AG04449 (cell line): ENCODE measurements at regions of chr1 and their contacts with region 1.

Region 1: DNA sequence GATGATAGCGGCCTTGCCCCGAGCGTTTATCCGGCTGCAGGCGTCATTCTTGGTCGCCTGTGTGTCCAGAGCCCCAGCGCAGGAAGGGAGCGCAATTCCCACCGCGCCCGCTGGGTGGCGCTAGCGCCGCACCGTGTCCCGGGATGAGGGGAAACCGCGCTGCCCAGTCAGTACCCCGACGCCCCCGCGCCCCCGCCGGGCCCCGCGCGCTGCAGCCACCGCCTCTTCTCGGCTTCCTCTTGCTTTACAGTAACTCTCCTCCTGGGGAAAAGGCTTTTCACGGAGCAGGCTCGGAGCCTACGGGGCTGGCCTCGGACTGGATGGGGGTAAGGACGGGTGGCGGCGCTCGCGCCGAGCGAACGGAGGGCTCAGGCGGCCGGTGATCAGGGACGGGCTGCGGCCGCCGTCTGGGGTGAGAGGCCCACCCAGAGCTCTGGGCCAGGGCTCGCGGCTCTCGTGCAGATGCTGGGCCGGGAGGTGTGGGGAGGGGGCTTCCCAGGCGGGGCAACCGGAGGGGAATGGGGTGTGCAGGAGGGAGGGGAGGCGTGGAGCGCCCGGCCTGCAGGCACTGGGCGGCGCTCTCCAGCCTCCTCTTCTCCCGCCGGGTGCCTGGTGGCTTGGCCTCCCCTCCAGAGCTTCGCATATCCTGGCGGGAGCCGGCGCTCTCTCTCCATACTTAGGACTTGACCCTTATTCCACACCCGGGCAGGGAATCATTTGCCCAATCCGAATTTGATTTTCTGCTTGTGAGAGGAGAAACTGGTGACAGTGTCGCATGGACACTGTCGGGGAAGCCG is 29.8 kb downstream of the TEX35 start:
- DNase-seq: no peak
- H3K4me3 ChIP-seq: peak overlapping the region; percentile 72
- CTCF ChIP-seq: peak; percentile 93

Region 2: GRCh38 chr1:178310685-178311105 is 232.1 kb before region 1 on chr1:
- CTCF ChIA-PET with region 1: interaction called, 69 read pairs
- POLR2A ChIA-PET with region 1: no interaction called
- DNase-seq: peak; percentile 34
- H3K4me3 ChIP-seq: no peak overlapping the region
- CTCF ChIP-seq: peak; percentile 43

Region 3: GRCh38 chr1:178733972-178734371 is 191.2 kb after region 1 on chr1:
- CTCF ChIA-PET with region 1: interaction called, 12 read pairs
- POLR2A ChIA-PET with region 1: no interaction called
- DNase-seq: no peak
- H3K4me3 ChIP-seq: no peak overlapping the region
- CTCF ChIP-seq: no peak

Region 4: DNA sequence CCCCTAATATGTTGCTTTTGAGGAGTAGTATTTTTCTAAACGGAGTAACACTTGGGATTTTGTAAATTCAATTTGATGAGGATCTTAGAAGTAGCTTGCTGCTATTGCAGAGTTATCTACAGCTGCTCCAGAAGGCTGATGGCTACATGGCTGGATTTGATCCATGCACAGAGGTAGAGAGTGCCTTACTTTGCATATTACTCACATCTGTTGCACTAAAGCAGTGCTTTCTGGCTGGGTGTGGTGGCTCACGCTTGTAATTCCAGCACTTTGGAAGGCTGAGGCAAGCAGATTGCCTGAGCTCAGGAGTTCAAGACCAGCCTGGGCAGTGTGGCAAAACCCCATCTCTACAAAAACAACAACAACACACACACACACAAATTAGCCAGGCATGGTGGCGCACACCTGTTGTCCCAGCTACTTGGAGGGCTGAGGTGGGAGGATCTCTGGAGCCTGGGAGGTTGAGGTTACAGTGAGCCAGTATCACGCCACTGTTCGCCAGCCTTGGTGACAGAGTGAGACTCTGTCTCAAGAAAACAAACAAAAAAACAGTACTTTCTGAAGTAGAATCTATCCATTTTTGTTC is 206.9 kb after region 1 on chr1:
- CTCF ChIA-PET with region 1: interaction called, 106 read pairs
- POLR2A ChIA-PET with region 1: no interaction called
- DNase-seq: no peak
- H3K4me3 ChIP-seq: no peak overlapping the region
- CTCF ChIP-seq: no peak

Region 5: GRCh38 chr1:178781533-178782330 is 239.0 kb after region 1 on chr1:
- CTCF ChIA-PET with region 1: interaction called, 11 read pairs
- POLR2A ChIA-PET with region 1: no interaction called
- DNase-seq: no peak
- H3K4me3 ChIP-seq: no peak overlapping the region
- CTCF ChIP-seq: no peak

Region 6: DNA sequence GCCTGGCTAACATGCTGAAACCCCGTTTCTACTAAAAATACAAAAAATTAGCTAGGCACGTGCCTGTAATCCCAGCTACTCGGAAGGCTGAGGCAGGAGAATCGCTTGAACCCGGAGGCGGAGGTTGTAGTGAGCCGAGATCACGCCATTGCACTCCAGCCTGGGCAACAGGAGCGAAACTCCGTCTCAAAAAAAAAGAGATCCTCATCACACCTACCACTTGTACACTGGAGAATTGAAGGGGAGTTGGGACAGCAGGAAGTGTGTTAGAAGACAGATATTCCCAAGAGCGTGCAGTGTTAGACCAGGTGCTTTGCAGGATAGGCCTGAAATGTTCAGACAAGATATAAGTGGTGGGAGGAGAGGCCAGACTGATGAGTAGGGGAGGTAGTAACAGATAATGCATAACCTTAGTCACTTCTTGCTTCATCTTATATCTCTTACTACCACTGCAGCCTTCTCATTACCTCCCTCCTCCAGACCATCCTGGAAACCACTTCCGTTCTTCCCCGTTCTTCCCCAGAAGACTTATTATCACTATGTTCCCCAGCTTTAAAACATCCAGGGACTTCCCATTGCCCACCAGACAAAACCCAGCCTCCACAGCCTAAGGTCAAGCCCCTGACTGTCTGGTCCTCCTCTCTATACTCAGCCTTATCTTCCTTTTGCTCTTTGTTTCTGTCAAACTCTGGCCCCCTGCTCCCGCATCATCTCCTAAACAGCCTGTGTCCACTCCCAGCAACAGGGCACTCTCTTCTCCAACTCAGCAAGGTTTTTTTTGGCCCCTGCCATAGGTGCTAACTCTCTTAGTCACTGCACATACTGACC is 504.3 kb after region 1 on chr1:
- CTCF ChIA-PET with region 1: no interaction called
- POLR2A ChIA-PET with region 1: no interaction called
- DNase-seq: no peak
- H3K4me3 ChIP-seq: no peak overlapping the region
- CTCF ChIP-seq: no peak